Caco-2 (cell line): ENCODE measurements at regions of chr16 and their contacts with region 1.

Region 1: GRCh38 chr16:55711959-55712876 is 56.4 kb downstream of the SLC6A2 start:
- DNase-seq: peak; percentile 67 to 81
- H3K4me3 ChIP-seq: no peak overlapping the region
- H3K4me3 Mint-ChIP-seq: no peak overlapping the region
- H3K27ac Mint-ChIP-seq: no peak overlapping the region
- H3K4me1 ChIP-seq: no peaks in the 10 kb centered on the region
- H3K4me1 Mint-ChIP-seq: no peaks in the 10 kb centered on the region
- H3K27me3 ChIP-seq: no peaks in the 10 kb centered on the region; the same call in 1 of the 2 replicates
- H3K27me3 Mint-ChIP-seq: peaks cover 15% of the 10 kb centered on the region
- CTCF ChIP-seq: peak; percentile 79 to 80

Region 2: GRCh38 chr16:55480228-55480661 is 232.0 kb before region 1 on chr16:
- CTCF ChIA-PET with region 1: no interaction called
- POLR2A ChIA-PET with region 1: no interaction called
- intact Hi-C with region 1: no loop called
- DNase-seq: no peak
- H3K4me3 ChIP-seq: no peak overlapping the region
- H3K4me3 Mint-ChIP-seq: no peak overlapping the region
- H3K27ac Mint-ChIP-seq: no peak overlapping the region
- H3K4me1 ChIP-seq: no peaks in the 10 kb centered on the region
- H3K4me1 Mint-ChIP-seq: peaks cover 6% of the 10 kb centered on the region
- H3K27me3 ChIP-seq: no peaks in the 10 kb centered on the region
- H3K27me3 Mint-ChIP-seq: peaks cover 18% of the 10 kb centered on the region
- CTCF ChIP-seq: no peak

Region 3: DNA sequence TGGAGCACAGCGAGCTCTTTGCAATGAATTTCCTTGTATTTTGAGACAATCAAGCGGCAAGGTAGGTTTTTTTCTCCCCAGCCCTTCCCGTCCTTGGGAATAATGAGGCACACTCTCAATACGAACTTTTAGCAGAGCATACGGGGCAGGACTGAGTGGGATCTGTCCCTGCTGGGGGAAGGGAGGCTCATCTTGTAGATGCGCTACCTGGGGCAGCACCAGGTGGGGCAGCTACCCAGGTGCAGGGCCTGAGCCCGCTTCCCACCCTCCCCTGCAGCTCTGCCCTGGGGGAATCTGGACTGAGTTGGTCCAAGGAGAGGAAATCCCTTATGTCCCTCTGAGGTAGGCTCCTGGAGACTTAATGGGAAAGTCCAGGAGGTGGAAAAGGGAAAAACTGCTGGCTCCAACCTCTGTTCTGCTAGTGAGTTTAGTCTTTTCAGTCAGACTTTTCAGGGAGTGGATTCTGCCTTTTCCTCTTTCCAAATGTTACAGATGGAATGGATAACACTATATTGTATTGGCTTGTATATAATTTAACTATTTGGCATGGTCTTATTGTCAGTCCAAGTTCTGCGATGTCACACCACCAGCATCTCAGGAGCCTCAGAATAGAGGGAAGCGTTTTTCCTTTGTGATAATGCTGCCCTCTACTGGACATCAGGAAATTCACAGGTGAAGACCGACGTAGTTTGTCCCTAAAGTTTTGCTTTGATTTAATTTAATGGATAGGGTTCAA is 130.3 kb after region 1 on chr16:
- CTCF ChIA-PET with region 1: interaction called, 3 read pairs
- POLR2A ChIA-PET with region 1: no interaction called
- intact Hi-C with region 1: loop called (anchors 1 kb)
- DNase-seq: peak in 1 of 2 experiments; percentile 62
- H3K4me3 ChIP-seq: no peak overlapping the region
- H3K4me3 Mint-ChIP-seq: no peak overlapping the region
- H3K27ac Mint-ChIP-seq: no peak overlapping the region
- H3K4me1 ChIP-seq: no peaks in the 10 kb centered on the region
- H3K4me1 Mint-ChIP-seq: no peaks in the 10 kb centered on the region
- H3K27me3 ChIP-seq: no peaks in the 10 kb centered on the region; the same call in 1 of the 2 replicates
- H3K27me3 Mint-ChIP-seq: peaks cover 16% of the 10 kb centered on the region
- CTCF ChIP-seq: peak; percentile 70 to 84